MCF 10A (cell line): ENCODE measurements at regions of chr3 and their contacts with region 1.

Region 1: DNA sequence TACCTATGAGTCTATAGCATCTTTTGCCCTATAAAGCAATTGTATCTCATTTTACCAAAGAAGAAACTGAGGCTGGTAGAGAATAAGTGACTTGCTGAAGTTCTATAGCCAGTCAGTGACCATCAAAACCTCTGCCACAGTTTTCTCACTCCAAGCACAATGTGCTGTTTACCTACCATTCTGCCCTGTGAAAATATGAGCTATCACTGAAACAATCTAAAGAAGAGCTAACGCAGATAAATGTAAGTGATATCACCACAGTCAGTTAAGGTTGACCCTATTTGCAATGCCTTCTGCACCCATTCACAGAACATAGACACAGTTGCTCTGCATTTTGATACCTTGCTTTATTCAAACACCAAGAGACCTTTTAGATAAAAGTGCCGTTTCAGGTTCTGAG is 227.5 kb downstream of the P3H2 start:
- DNase-seq: no peak
- H3K4me3 Mint-ChIP-seq: no peak overlapping the region
- H3K27ac Mint-ChIP-seq: no peak overlapping the region
- H3K4me1 Mint-ChIP-seq: no peaks in the 10 kb centered on the region
- H3K27me3 Mint-ChIP-seq: no peaks in the 10 kb centered on the region
- CTCF ChIP-seq: no peak

Region 2: DNA sequence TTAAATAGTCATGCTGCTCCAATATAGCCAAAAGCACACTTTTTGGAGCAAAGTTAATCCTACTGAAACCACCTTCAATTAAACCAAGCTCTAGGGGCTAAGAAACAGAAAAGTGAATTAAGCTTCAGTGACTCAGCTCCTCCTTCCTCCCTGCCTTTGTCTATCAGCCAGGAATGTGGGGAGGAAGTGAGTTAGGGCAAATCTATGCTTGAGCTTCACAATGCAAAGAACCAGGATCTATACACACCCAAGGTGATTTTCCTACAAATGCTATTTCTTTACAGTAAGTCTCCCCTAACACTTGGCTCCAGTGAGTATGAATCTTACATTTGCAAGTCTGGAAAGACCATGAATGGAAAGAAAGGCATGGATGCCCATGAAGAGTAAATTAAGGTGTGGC is 15.4 kb after region 1 on chr3:
- CTCF ChIA-PET with region 1: interaction called, 3 read pairs
- POLR2A ChIA-PET with region 1: interaction called, 11 read pairs
- intact Hi-C with region 1: no loop called
- DNase-seq: peak; percentile 86
- H3K4me3 Mint-ChIP-seq: no peak overlapping the region
- H3K27ac Mint-ChIP-seq: peak overlapping the region; percentile 80
- H3K4me1 Mint-ChIP-seq: peaks cover 33% of the 10 kb centered on the region
- H3K27me3 Mint-ChIP-seq: no peaks in the 10 kb centered on the region
- CTCF ChIP-seq: no peak

Region 3: DNA sequence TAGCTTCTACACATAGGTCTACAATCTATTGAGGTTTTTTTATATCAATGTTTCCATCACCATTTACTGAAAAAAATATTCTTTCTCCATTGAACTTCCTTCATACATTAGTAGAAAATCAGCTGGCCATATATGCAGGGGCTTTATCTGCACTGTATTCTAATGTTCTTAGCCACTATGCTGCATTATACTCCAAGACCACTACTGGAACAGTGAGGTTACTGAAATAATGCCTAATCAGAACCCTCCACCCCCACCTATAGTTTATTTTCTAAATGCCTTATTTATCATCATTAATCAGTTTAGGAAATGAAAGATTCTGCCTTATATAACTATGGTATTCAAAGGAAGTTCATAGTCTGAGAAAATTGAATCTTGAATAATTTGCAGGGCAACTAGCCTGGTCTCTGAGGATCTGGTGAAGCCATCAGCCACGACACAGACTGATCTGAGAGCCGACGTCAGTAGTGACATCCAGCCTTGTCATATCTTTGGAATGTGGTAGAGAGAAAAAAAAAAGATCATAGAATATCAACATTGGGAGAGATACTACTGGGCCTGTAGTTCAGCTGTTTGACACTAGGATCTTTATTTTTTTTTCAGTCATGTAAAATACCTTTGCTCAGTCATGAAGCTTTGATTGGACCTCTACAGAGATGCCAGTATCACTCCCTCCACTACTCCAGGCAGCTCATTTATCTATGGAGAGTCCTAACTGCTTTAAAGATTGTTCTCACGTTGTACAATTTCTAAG is 160.9 kb after region 1 on chr3:
- CTCF ChIA-PET with region 1: no interaction called
- POLR2A ChIA-PET with region 1: no interaction called
- intact Hi-C with region 1: no loop called
- DNase-seq: peak; percentile 42
- H3K4me3 Mint-ChIP-seq: no peak overlapping the region
- H3K27ac Mint-ChIP-seq: peak overlapping the region; percentile 75
- H3K4me1 Mint-ChIP-seq: peaks cover 28% of the 10 kb centered on the region
- H3K27me3 Mint-ChIP-seq: no peaks in the 10 kb centered on the region
- CTCF ChIP-seq: peak; percentile 21

Region 4: DNA sequence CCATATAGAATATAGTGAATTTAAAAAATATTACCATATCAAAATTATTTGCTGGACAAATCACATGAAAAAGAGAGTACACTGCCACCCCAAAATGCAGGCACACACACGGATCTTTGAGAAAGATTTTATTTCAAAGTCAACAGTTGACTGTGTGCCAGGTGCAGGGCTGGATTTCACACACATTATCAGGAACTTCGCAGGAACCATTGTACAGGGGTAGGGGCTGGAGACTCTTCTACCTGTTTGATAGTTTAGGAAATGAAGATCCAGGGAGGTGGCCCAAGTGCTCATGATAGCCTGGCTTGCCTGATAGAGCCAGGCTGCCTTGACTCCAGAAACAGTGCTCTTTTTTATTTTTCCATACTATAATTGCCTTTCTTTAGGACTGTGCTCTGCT is 674.8 kb after region 1 on chr3:
- CTCF ChIA-PET with region 1: no interaction called
- POLR2A ChIA-PET with region 1: no interaction called
- intact Hi-C with region 1: no loop called
- DNase-seq: no peak
- H3K4me3 Mint-ChIP-seq: no peak overlapping the region
- H3K27ac Mint-ChIP-seq: peak overlapping the region; percentile 35
- H3K4me1 Mint-ChIP-seq: peaks cover 20% of the 10 kb centered on the region
- H3K27me3 Mint-ChIP-seq: no peaks in the 10 kb centered on the region
- CTCF ChIP-seq: no peak